Naive thymus-derived CD4-positive, alpha-beta T cell (primary cell): ENCODE measurements at regions of chr12 and their contacts with region 1.

Region 1: GRCh38 chr12:108618079-108618952 is 15.4 kb downstream of the SELPLG start:
- DNase-seq: peak; percentile 61 to 81 (median 74)
- ATAC-seq: peak; percentile 72
- H3K4me3 ChIP-seq: no peak overlapping the region
- H3K4me3 Mint-ChIP-seq: peak overlapping the region in 8 of 10 donors; percentile 13 to 54 (median 34)
- H3K27ac ChIP-seq: peak overlapping the region; percentile 65
- H3K27ac Mint-ChIP-seq: peak overlapping the region; percentile 67 to 92 (median 79)
- H3K4me1 ChIP-seq: peaks cover 34 to 42% of the 10 kb centered on the region in 2 donors
- H3K4me1 Mint-ChIP-seq: peaks cover 44 to 72% (median 64%) of the 10 kb centered on the region in 7 donors
- H3K27me3 ChIP-seq: no peaks in the 10 kb centered on the region
- H3K27me3 Mint-ChIP-seq: no peaks in the 10 kb centered on the region

Region 2: GRCh38 chr12:108568338-108569154 is 49.8 kb before region 1 on chr12:
- CTCF ChIA-PET with region 1: interaction called, 119 read pairs
- POLR2A ChIA-PET with region 1: interaction called, 110 read pairs
- intact Hi-C with region 1: loop called (anchors 1 kb)
- DNase-seq: peak; percentile 38 to 92 (median 87)
- ATAC-seq: peak; percentile 96
- H3K4me3 ChIP-seq: peak overlapping the region; percentile 24
- H3K4me3 Mint-ChIP-seq: peak overlapping the region; percentile 76 to 91 (median 83)
- H3K27ac ChIP-seq: peak overlapping the region; percentile 72
- H3K27ac Mint-ChIP-seq: peak overlapping the region; percentile 87 to 99 (median 98)
- H3K4me1 ChIP-seq: peaks cover 30 to 55% of the 10 kb centered on the region in 2 donors
- H3K4me1 Mint-ChIP-seq: peaks cover 26 to 96% (median 85%) of the 10 kb centered on the region in 7 donors
- H3K27me3 ChIP-seq: no peaks in the 10 kb centered on the region
- H3K27me3 Mint-ChIP-seq: no peaks in the 10 kb centered on the region

Region 3: GRCh38 chr12:108640802-108641445 is 22.6 kb after region 1 on chr12:
- CTCF ChIA-PET with region 1: interaction called, 149 read pairs
- POLR2A ChIA-PET with region 1: interaction called, 132 read pairs
- intact Hi-C with region 1: no loop called
- DNase-seq: no peak
- ATAC-seq: no peak
- H3K4me3 ChIP-seq: no peak overlapping the region
- H3K4me3 Mint-ChIP-seq: no peak overlapping the region
- H3K27ac ChIP-seq: no peak overlapping the region
- H3K27ac Mint-ChIP-seq: peak overlapping the region in 3 of 9 donors; percentile 33 to 78 (median 68)
- H3K4me1 ChIP-seq: peaks cover 5 to 22% of the 10 kb centered on the region in 2 donors
- H3K4me1 Mint-ChIP-seq: peaks cover 30 to 54% (median 38%) of the 10 kb centered on the region in 7 donors
- H3K27me3 ChIP-seq: no peaks in the 10 kb centered on the region
- H3K27me3 Mint-ChIP-seq: no peaks in the 10 kb centered on the region

Region 4: GRCh38 chr12:108646600-108647579 is 28.6 kb after region 1 on chr12:
- CTCF ChIA-PET with region 1: interaction called, 29 read pairs
- POLR2A ChIA-PET with region 1: interaction called, 5 read pairs
- intact Hi-C with region 1: loop called in 1 of 2 experiments (anchors 1 kb)
- DNase-seq: peak in 1 of 9 donors; percentile 26
- ATAC-seq: no peak
- H3K4me3 ChIP-seq: no peak overlapping the region
- H3K4me3 Mint-ChIP-seq: peak overlapping the region; percentile 53 to 89 (median 78)
- H3K27ac ChIP-seq: peak overlapping the region; percentile 50
- H3K27ac Mint-ChIP-seq: peak overlapping the region; percentile 75 to 97 (median 90)
- H3K4me1 ChIP-seq: peaks cover 0 to 27% of the 10 kb centered on the region in 2 donors
- H3K4me1 Mint-ChIP-seq: peaks cover 21 to 37% (median 34%) of the 10 kb centered on the region in 7 donors
- H3K27me3 ChIP-seq: no peaks in the 10 kb centered on the region
- H3K27me3 Mint-ChIP-seq: no peaks in the 10 kb centered on the region

Region 5: GRCh38 chr12:108803428-108804105 is 185.3 kb after region 1 on chr12:
- CTCF ChIA-PET with region 1: interaction called, 23 read pairs
- POLR2A ChIA-PET with region 1: no interaction called
- intact Hi-C with region 1: loop called (anchors 1 to 2 kb)
- DNase-seq: peak; percentile 25 to 78 (median 70)
- ATAC-seq: peak; percentile 93
- H3K4me3 ChIP-seq: no peak overlapping the region
- H3K4me3 Mint-ChIP-seq: no peak overlapping the region
- H3K27ac ChIP-seq: no peak overlapping the region
- H3K27ac Mint-ChIP-seq: peak overlapping the region in 3 of 9 donors; percentile 37 to 62 (median 48)
- H3K4me1 ChIP-seq: peaks cover 0 to 3% of the 10 kb centered on the region in 2 donors
- H3K4me1 Mint-ChIP-seq: peaks cover 0 to 10% (median 3%) of the 10 kb centered on the region in 7 donors
- H3K27me3 ChIP-seq: no peaks in the 10 kb centered on the region
- H3K27me3 Mint-ChIP-seq: no peaks in the 10 kb centered on the region

Region 6: GRCh38 chr12:108950991-108951739 is 332.8 kb after region 1 on chr12:
- CTCF ChIA-PET with region 1: interaction called, 3 read pairs
- POLR2A ChIA-PET with region 1: no interaction called
- intact Hi-C with region 1: loop called in 1 of 2 experiments (anchors 1 kb)
- DNase-seq: peak; percentile 49 to 70 (median 63)
- ATAC-seq: peak; percentile 94
- H3K4me3 ChIP-seq: no peak overlapping the region
- H3K4me3 Mint-ChIP-seq: no peak overlapping the region
- H3K27ac ChIP-seq: no peak overlapping the region
- H3K27ac Mint-ChIP-seq: peak overlapping the region in 1 of 9 donors; percentile 4
- H3K4me1 ChIP-seq: no peaks in the 10 kb centered on the region
- H3K4me1 Mint-ChIP-seq: peaks cover 0 to 6% (median 4%) of the 10 kb centered on the region in 7 donors
- H3K27me3 ChIP-seq: no peaks in the 10 kb centered on the region
- H3K27me3 Mint-ChIP-seq: peaks cover 7 to 24% (median 17%) of the 10 kb centered on the region in 5 donors